Activated T-helper 2 cell treated with anti-CD3 and anti-CD28 coated beads, Interferon-gamma antibody, Interleukin-2, Interleukin-4, amounts not matched to agents 10 μg/mL and 5 μg/mL and 100 μg/mL, durations not matched to agents 14 hours and 24 hours and 36 hours (primary cell): ENCODE measurements at regions of chr2 and their contacts with region 1.

Region 1: DNA sequence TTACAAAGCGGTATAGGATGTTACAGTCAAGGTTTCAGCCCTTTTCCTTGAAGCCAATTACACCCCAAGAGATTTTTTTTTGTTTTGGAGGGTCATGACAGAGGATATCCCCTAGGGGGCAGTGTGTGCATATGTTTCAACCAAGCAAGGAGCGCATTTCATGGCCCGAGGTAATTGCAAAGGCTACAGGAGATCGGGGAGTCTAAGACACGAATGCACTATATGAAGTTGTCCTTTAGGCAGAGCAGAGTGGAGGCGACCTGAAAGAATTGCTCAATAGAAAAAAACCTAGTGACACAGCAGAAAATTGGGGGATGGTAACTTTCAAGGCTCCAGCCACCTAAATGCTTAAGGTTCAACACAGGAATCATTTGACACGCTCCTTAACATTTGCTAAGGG is 219.8 kb upstream of the PARD3B start:
- DNase-seq: peak; percentile 46
- H3K4me3 Mint-ChIP-seq: no peak overlapping the region
- H3K27ac Mint-ChIP-seq: no peak overlapping the region
- H3K4me1 Mint-ChIP-seq: peaks cover 6% of the 10 kb centered on the region
- H3K27me3 Mint-ChIP-seq: peaks cover 17% of the 10 kb centered on the region

Region 2: DNA sequence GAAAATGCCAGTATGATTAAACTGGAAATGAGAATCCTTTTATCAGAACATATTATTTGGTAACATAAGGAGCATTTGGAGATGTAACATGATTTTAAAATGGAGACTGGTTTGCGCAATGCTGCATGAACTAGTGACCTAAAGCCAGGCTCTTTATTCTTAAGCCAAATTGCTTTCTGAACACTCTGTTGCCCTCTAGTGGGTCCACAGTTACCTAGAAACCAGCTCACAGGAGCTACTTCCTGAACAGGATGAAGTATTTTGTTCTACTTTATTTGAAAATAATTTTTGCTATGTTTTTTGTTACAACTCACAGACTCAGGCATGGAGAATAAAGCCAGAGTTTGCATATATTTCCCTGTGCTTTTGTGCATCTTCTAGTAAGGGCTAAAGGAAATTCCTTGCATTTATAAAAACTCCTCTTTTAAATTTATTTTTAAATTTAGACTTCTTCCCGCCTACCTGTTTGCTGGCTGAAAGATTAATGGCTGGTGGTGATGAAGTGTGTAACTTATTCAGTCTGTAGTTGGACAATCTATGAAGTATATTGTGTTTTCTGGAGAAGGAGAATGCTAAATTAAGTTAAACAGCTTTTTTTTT is 366.5 kb after region 1 on chr2:
- intact Hi-C with region 1: loop called (anchors 10 kb)
- DNase-seq: no peak
- H3K4me3 Mint-ChIP-seq: no peak overlapping the region
- H3K27ac Mint-ChIP-seq: no peak overlapping the region
- H3K4me1 Mint-ChIP-seq: peaks cover 10% of the 10 kb centered on the region
- H3K27me3 Mint-ChIP-seq: peaks cover 14% of the 10 kb centered on the region

Region 3: GRCh38 chr2:204871231-204871953 is 545.9 kb after region 1 on chr2:
- intact Hi-C with region 1: loop called (anchors 10 kb)
- DNase-seq: no peak
- H3K4me3 Mint-ChIP-seq: no peak overlapping the region
- H3K27ac Mint-ChIP-seq: no peak overlapping the region
- H3K4me1 Mint-ChIP-seq: peaks cover 35% of the 10 kb centered on the region
- H3K27me3 Mint-ChIP-seq: peaks cover 25% of the 10 kb centered on the region

Region 4: GRCh38 chr2:205885492-205886099 is 1560.1 kb after region 1 on chr2:
- intact Hi-C with region 1: loop called (anchors 10 kb)
- DNase-seq: peak; percentile 47
- H3K4me3 Mint-ChIP-seq: no peak overlapping the region
- H3K27ac Mint-ChIP-seq: no peak overlapping the region
- H3K4me1 Mint-ChIP-seq: peaks cover 1% of the 10 kb centered on the region
- H3K27me3 Mint-ChIP-seq: peaks cover 8% of the 10 kb centered on the region

Region 5: DNA sequence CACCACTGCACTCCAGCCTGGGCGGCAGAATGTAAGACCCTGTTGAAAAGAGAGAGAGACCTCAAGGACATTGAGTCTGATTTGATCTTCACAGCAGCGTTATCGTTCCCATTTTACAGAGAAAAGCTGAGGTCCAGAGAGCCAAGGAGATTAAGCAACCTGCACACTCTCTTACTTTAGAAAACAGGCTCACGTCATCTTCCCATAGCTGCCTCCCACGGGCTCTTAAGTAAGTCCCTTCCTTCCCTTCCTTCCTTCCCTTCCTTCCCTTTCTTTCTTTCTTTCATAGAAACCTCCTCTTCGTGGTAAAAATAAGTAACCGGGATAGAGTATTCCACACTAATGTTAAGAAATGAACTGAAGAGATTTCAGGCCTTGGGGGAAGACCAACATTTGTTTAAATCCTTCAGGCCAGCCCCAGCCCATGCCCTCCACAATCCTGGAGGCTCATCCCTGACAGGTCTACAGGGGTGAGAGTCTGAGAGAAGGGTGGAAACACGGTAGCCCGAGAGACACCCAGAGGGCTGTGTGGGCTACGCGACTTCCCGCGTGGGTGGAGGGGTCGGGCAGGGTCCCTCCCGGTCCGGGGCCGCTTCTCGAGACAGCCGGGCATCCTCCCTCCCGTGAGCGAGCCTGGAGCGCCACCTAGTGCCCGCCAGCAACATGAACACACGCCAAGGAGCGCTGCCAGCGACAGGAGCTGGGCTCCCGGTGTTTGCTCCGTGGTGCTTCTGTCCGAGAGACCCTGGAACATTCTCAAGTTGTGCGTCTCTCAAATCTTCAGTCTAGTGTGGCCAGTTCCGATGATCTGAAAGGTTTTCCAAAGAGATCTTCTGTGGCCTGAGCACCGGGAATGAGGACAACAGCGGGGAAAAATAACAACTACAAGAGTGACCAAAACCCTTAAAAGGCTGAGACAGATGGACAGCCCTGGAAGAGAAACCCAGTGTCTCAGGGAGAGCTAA is 1600.2 kb after region 1 on chr2:
- intact Hi-C with region 1: loop called (anchors 10 kb)
- DNase-seq: peak; percentile 46
- H3K4me3 Mint-ChIP-seq: no peak overlapping the region
- H3K27ac Mint-ChIP-seq: no peak overlapping the region
- H3K4me1 Mint-ChIP-seq: peaks cover 6% of the 10 kb centered on the region
- H3K27me3 Mint-ChIP-seq: peaks cover 44% of the 10 kb centered on the region